ENCODE measurements at regions of chr5 and their contacts with region 1.

Region 1: DNA sequence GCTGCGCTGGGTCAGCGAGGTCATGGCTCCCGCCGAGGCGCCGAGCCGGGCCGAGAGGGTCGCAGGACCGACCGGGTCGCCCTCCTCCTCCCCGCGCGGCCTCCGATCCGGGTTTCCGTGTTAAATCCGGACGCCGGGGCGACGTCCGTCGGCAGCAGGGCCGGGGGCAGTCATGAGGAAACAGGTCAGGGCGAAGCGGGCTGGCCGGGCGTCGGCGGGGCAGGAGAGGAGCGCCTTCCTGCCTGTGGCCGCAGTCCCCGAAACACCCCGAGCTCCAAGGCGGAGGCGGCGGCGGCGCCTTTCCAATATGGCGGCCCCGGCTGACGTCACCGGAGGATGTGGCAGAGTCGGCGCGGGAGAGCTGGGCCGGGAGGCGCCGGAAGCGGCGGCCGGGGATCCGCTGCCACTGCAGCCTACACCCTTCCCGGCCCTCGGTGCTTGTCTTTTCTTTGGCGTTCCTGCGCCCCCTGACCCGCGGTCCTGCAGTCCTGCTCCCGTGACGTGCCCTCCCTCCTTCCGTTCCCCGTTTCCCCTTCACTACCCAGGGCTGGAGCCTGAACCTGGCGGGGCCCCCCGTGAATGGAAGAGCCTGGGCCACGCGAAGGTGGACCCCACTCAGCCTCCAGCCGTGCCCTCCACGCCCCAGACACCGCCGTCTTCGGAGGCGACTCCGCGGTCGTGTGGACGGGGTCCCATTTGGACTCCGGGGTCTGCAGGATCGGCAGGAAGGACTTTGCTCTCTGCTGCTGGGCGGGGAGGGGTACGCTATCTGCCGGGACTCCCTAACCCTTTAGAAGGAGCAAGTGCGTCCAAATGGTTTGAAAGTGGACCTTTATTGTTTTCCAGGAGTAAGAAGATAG is at the start of gene GOLPH3:
- DNase-seq: peak; percentile 92
- H3K4me3 ChIP-seq: peak within 1 kb of the TSS; percentile 97 to 98
- H3K27ac ChIP-seq: peak within 1 kb of the TSS; percentile 100
- H3K4me1 ChIP-seq: peaks cover 9% of the 10 kb centered on the region
- H3K27me3 ChIP-seq: no peaks in the 10 kb centered on the region
- CTCF ChIP-seq: peak in 2 of 4 experiments; percentile 26 to 33
- POLR2A ChIP-seq: peak; percentile 88
- total RNA-seq, gene GOLPH3: 118 to 259 TPM

Region 2: DNA sequence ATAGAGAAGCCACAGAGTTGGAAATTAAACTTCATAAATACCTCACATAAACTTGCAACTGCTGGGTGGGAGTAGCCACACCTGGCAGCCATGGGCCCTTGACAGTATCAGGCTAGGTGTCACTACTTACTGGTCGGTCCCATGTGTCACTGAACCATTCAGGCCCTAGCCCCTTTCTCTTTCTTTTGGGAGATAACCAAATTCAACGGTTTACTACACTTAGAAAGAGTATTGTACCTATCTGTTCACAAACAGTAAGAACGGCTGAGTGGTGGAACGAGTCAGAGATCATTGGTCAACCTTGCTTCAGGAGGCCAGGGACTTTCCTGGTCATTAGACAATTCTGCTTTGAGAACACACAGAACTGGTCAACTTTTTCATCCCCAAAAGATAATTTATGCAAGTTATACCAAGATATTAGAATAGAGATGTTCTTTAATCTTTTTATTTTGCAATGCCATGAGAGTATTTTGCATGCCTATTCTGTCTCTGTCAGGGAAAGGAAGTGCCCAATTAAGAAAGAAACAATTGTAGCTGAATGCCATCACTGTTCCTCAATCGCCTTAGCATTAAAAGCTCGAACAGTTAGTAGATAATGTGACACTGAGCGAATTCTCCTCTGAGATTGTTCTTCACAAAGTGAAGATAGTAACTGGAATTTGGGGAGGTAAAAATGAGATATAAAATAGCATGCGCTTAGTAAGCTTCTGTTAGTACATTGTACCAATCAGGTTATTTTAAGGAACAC is 51.0 kb before region 1 on chr5:
- intact Hi-C with region 1: no loop called
- DNase-seq: no peak
- H3K4me3 ChIP-seq: no peak overlapping the region
- H3K27ac ChIP-seq: no peak overlapping the region
- H3K4me1 ChIP-seq: no peaks in the 10 kb centered on the region
- H3K27me3 ChIP-seq: no peaks in the 10 kb centered on the region
- CTCF ChIP-seq: no peak
- POLR2A ChIP-seq: no peak

Region 3: DNA sequence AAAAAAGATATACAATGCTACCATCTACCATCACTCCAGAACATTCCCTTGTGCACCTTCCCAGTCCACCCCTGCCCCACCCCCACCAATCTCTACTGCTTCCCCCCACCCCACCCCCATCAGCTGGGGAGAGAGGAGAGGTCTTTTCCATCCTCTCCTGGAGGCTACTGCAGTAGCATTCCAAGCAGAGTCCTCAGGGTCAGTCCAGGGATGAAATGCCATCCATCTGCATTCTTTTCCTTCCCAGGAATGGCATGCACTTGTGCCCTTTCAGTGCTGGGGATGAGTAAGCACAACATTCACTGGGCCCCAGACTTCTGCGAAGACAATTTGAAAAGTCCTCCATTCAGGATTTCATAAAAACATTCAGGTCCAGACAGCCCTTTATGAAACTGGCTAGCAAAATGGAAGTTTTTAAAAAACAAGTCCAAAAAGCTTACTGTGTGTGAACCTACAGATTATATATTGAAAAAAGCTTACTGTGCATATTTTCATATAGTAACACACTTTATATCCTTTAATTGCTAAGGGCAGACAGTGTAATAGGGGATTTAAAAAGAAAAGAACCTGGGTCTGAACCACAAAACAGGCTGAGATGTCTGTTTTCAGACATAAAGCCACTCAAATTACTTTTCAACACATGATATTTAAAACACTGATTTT is 49.8 kb after region 1 on chr5:
- intact Hi-C with region 1: loop called (anchors 2 kb)
- DNase-seq: no peak
- H3K4me3 ChIP-seq: no peak overlapping the region
- H3K27ac ChIP-seq: peak overlapping the region; percentile 65 to 77
- H3K4me1 ChIP-seq: peaks cover 10% of the 10 kb centered on the region
- H3K27me3 ChIP-seq: no peaks in the 10 kb centered on the region
- CTCF ChIP-seq: no peak
- POLR2A ChIP-seq: no peak

Region 4: GRCh38 chr5:32241034-32241783 is 67.0 kb after region 1 on chr5:
- intact Hi-C with region 1: no loop called
- DNase-seq: no peak
- H3K4me3 ChIP-seq: no peak overlapping the region
- H3K27ac ChIP-seq: no peak overlapping the region
- H3K4me1 ChIP-seq: no peaks in the 10 kb centered on the region
- H3K27me3 ChIP-seq: no peaks in the 10 kb centered on the region
- CTCF ChIP-seq: no peak
- POLR2A ChIP-seq: no peak

Region 5: DNA sequence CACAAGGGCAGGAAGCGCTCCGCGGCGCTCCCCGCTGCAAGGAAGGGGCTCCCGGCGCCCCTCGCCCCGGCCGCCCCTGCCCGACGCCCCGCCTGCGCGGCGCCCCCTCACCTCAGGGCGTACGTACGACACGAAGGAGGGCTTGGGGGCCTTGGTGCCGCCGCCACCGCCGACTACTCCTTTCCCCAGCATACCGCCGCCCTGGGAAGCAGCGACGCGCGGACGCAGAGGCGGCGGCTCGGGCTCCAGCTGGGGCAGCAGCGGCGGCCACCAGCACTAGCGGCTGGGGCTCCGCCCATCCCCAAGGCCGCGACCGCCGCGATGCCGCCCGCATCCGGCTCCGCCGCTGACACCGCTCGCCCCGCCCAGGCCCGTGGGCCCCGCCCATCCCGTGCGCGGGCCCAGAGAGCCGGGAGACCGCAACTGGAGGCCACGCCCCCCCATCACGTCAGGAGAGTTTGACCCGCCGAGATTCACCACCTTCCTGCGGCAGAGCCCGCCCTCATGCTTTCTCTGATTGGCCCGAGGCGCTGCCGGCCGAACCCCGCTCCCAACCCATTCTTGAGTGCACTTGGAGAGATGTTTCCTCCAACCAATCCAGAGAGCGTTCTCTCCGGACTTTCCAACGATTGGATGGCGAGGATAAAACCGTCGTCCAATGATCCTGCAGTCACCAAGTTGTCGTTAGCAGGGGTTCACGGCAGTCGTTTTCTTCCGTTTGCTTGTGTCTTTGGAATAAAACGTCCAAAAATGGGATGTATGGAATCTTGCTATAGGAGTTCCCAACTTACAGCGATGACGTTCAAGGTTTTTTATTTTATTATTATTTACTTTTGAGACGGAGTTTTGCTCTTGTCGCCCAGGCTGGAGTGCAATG is 138.6 kb after region 1 on chr5 and contains the start of gene MTMR12:
- intact Hi-C with region 1: loop called (anchors 5 kb)
- DNase-seq: peak; percentile 100
- H3K4me3 ChIP-seq: peak within 1 kb of the TSS; percentile 96 to 98
- H3K27ac ChIP-seq: peak within 1 kb of the TSS; percentile 98 to 99
- H3K4me1 ChIP-seq: no peaks in the 10 kb centered on the region
- H3K27me3 ChIP-seq: no peaks in the 10 kb centered on the region
- CTCF ChIP-seq: no peak
- POLR2A ChIP-seq: peak; percentile 94
- total RNA-seq, gene MTMR12: 43.1 to 70.7 TPM

Measured in prostate gland (tissue), 2 donors.